PC-9 (cell line): ENCODE measurements at regions of chr5 and their contacts with region 1.

Region 1: DNA sequence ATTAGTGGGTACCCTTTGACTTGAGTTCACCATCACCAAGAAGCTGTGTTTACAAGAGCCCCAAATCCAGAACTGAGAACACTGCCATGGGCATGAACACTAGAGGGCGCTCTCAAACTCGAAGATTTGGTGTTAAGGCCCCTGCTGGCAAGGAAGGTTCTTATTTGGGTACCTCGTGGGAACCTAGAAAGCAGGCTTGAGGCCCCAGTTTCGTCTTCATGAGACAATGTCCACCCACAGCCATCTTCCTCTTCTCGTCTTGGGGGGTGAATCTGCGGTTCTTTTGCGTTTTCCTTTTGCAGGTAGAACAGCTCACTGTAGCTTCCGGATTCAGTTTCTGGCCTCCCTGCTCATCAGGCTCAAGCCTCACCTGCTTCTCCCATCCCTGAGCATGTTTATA is 184.0 kb downstream of the SEMA5A start:
- DNase-seq: peak; percentile 49 to 66
- H3K4me3 ChIP-seq: no peak overlapping the region
- H3K27ac ChIP-seq: no peak overlapping the region
- H3K4me1 ChIP-seq: peaks cover 19% of the 10 kb centered on the region
- H3K27me3 ChIP-seq: no peaks in the 10 kb centered on the region
- CTCF ChIP-seq: peak; percentile 95

Region 2: DNA sequence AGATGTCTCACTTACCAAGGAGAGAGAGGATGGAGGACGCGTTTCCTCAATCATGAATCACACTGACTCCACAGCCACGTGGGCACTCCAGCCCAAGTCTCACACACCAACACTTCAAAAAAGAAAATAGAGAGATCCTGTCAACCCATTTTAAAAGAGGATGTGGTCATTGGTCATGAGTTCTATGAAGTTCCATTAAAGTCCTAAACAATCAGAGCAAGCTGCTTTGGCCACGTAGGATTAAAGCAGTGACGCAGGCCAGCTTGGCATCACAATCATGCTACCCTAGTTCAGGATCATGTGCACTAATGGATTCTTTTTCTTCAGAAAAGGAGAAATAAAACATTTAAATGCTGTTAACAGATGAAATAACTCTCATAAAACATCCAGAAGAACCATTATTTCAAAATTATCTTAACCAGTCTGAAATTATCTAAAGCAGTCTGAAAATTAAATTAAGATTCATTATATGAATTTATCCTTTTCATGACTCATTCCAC is 76.0 kb after region 1 on chr5:
- CTCF ChIA-PET with region 1: no interaction called
- POLR2A ChIA-PET with region 1: no interaction called
- intact Hi-C with region 1: no loop called
- DNase-seq: peak in 1 of 2 experiments; percentile 18
- H3K4me3 ChIP-seq: no peak overlapping the region
- H3K27ac ChIP-seq: no peak overlapping the region
- H3K4me1 ChIP-seq: peaks cover 22% of the 10 kb centered on the region
- H3K27me3 ChIP-seq: no peaks in the 10 kb centered on the region
- CTCF ChIP-seq: no peak

Region 3: GRCh38 chr5:9544502-9545135 is 182.8 kb after region 1 on chr5:
- CTCF ChIA-PET with region 1: no interaction called
- POLR2A ChIA-PET with region 1: no interaction called
- intact Hi-C with region 1: loop called (anchors 10 kb)
- DNase-seq: peak; percentile 71 to 75
- H3K4me3 ChIP-seq: peak overlapping the region; percentile 80
- H3K27ac ChIP-seq: no peak overlapping the region
- H3K4me1 ChIP-seq: peaks cover 22% of the 10 kb centered on the region
- H3K27me3 ChIP-seq: no peaks in the 10 kb centered on the region
- CTCF ChIP-seq: peak; percentile 99